ENCODE measurements at regions of chr16 and their contacts with region 1.

Region 1: DNA sequence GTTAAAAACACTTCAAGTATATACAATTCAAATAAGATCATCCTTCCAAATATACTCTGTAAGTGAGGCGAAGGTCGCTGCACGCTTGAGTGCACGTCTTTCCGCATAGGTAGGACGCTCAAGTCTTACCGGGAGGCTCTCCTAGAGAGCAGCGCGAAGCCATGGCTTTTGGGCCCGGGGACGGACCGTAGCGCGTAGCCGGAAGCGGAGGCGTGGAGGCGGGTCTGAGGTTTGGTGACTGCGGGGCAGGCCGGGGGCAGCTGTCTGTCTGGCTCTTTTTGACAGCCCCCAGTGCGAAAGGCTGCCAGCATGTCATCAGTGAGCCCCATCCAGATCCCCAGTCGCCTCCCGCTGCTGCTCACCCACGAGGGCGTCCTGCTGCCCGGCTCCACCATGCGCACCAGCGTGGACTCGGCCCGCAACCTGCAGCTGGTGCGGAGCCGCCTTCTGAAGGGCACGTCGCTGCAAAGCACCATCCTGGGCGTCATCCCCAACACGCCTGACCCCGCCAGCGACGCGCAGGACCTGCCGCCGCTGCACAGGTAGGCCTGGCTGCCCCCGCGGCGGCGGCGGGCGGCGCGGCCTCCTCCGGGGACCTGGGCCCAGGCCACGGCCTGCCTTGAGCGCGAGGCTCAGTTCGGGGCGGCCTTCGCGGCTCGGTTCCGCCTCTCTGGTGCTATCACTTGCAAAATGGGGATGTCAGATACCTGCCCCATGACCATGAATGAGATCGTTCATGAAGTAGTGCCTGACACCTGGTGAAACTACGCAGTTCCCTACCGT is at the start of gene LONP2:
- H3K4me3 Mint-ChIP-seq: peak within 1 kb of the TSS; percentile 99
- H3K27ac Mint-ChIP-seq: peak within 1 kb of the TSS; percentile 93
- H3K4me1 Mint-ChIP-seq: peaks cover 26% of the 10 kb centered on the region
- H3K27me3 Mint-ChIP-seq: no peaks in the 10 kb centered on the region

Region 2: GRCh38 chr16:48295499-48296281 is 51.4 kb after region 1 on chr16:
- intact Hi-C with region 1: no loop called
- H3K4me3 Mint-ChIP-seq: no peak overlapping the region
- H3K27ac Mint-ChIP-seq: no peak overlapping the region
- H3K4me1 Mint-ChIP-seq: no peaks in the 10 kb centered on the region
- H3K27me3 Mint-ChIP-seq: no peaks in the 10 kb centered on the region

Region 3: GRCh38 chr16:48330841-48331192 is 86.5 kb after region 1 on chr16:
- intact Hi-C with region 1: loop called (anchors 10 kb)
- H3K4me3 Mint-ChIP-seq: no peak overlapping the region
- H3K27ac Mint-ChIP-seq: no peak overlapping the region
- H3K4me1 Mint-ChIP-seq: peaks cover 20% of the 10 kb centered on the region
- H3K27me3 Mint-ChIP-seq: no peaks in the 10 kb centered on the region

Measured in dendritic cell treated with granulocyte-macrophage colony-stimulating factor and Interleukin-4, amounts not matched to agents 40 ng/mL and 50 ng/mL, for 4 days (primary cell).